A549 (cell line): ENCODE measurements at regions of chr22 and their contacts with region 1.

Region 1: DNA sequence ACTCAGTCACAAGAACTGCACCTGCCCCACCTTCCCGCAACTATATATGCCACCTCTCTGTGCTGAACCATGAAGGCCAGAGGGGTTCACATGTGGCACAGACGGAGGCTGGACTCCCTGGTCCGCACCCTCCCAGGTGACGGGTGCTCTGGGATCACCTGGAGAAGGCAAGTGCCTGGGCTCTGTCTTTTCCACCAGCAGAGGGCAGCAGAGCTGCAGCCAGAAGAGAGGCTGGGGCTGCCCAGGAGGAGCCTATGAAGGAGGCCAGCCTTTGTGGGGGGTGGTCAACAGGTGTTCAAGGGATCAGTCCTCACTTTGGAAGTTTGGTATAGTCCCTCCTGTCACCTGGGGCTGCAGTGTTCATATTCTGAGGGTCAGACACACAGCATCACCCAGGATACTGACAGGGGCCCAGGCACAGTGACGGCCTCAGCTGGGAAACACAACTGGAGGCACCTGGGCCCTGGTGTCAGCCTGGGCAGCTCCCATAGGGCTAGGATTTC is 39.2 kb upstream of the IGLL5 start:
- DNase-seq: peak; percentile 18 to 38
- ATAC-seq: peak; percentile 87 to 98
- H3K4me3 ChIP-seq: no peak overlapping the region
- H3K27ac ChIP-seq: no peak overlapping the region
- H3K4me1 ChIP-seq: no peaks in the 10 kb centered on the region
- CTCF ChIP-seq: peak; percentile 72
- EP300 ChIP-seq: no peak
- POLR2A ChIP-seq: no peak
- RAD21 ChIP-seq: peak; percentile 56 to 63

Region 2: DNA sequence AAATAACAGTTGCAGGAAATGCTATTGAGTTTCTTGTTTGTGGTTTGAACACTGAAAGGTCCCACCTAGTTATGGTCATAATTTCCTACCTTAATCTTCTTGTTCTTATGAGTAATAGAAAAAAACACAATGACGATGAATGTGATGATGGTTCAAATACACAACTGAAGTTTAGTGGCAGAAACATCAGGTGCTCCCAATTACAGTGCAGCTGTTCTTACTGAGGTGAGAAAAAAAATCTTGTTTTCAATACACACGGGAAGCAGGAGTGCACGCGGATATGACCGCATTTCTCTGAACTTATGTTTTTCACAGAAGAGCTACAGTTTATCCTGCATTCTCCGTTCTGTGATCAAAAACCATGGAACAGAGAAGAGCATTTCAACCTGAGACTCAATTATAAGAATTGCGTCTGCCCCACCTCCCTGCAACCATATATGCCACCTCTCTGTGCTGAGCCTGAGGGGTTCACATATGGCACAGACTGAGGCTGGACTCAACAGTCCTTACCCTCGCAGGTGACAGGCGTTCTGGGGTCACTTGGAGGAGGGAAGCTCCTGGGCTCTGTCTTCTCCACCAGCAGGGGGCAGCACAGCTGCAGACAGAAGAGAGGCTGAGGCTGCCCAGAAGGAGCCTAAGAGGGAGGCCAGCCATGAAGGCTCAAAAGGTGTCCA is 60.5 kb before region 1 on chr22:
- CTCF ChIA-PET with region 1: interaction called, 12 read pairs
- POLR2A ChIA-PET with region 1: no interaction called
- DNase-seq: peak; percentile 39 to 52
- ATAC-seq: peak; percentile 80 to 95; a peak in 5 of 6 replicates
- H3K4me3 ChIP-seq: no peak overlapping the region
- H3K27ac ChIP-seq: no peak overlapping the region
- H3K4me1 ChIP-seq: no peaks in the 10 kb centered on the region
- CTCF ChIP-seq: peak; percentile 58; the same call in 2 of the 3 replicates
- EP300 ChIP-seq: no peak
- POLR2A ChIP-seq: no peak
- RAD21 ChIP-seq: peak; percentile 30 to 46; a peak in 4 of 5 replicates

Region 3: DNA sequence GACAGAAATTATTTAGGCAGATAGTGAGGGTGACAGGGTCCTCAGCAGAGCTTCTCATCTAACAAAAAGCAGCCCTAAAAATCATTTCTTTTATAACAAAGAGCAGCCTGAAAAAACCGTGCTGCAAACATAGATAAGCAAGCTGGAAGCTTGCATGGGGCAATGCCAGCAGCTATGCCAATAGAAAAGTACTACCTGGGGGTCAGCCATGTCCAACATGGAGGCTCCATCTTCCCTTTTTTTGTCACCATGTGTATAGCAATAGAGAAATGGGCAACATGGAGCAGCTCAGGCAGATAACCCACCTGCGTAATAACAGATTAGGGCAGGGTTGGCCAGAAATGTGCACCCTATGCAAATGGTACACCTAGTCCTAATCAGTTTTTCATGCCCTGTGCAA is 18.2 kb before region 1 on chr22:
- CTCF ChIA-PET with region 1: interaction called, 11 read pairs
- POLR2A ChIA-PET with region 1: no interaction called
- DNase-seq: no peak
- ATAC-seq: no peak
- H3K4me3 ChIP-seq: no peak overlapping the region
- H3K27ac ChIP-seq: no peak overlapping the region
- H3K4me1 ChIP-seq: no peaks in the 10 kb centered on the region
- CTCF ChIP-seq: no peak
- EP300 ChIP-seq: no peak
- POLR2A ChIP-seq: no peak
- RAD21 ChIP-seq: no peak

Region 4: DNA sequence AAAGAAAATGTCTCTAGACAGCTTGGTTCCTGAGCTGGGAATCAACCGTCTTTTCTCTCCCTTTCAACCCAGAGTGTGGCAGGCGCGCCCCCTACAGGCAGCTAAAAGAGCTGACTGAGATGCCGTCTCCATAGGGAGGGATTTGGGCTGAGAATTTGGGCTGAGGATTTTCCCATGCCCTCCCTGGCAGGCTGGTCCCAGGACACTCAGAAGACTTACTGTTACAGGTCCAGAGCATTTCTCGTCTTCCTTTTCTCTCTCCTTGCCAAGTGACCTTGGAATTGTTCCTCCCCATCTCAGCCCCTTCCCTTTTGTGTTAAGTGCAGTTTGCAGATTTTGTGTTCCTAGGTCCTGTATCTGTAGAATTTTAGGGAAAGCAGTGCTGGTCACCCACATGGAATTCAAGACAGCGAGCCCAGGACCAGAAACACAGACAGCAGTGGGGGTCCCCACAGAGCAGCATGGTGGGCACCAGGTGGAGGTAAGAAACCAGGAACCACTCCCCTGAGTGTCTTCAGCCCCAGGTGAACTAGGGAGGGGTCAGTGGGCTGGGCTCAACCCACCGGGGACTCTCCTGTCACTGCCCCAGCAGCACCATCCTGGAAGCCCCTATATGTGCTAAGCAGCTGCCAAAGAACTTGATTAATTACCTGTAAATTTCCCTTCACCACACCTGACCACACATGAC is 29.3 kb after region 1 on chr22:
- CTCF ChIA-PET with region 1: interaction called, 22 read pairs
- POLR2A ChIA-PET with region 1: no interaction called
- DNase-seq: peak; percentile 51 to 61
- ATAC-seq: peak; percentile 66 to 82; a peak in 5 of 6 replicates
- H3K4me3 ChIP-seq: no peak overlapping the region
- H3K27ac ChIP-seq: no peak overlapping the region
- H3K4me1 ChIP-seq: no peaks in the 10 kb centered on the region
- CTCF ChIP-seq: peak; percentile 50
- EP300 ChIP-seq: no peak
- POLR2A ChIP-seq: no peak
- RAD21 ChIP-seq: peak; percentile 48 to 67; a peak in 4 of 5 replicates